Mammary epithelial cell (primary cell): ENCODE measurements at regions of chr2 and their contacts with region 1.

Region 1: DNA sequence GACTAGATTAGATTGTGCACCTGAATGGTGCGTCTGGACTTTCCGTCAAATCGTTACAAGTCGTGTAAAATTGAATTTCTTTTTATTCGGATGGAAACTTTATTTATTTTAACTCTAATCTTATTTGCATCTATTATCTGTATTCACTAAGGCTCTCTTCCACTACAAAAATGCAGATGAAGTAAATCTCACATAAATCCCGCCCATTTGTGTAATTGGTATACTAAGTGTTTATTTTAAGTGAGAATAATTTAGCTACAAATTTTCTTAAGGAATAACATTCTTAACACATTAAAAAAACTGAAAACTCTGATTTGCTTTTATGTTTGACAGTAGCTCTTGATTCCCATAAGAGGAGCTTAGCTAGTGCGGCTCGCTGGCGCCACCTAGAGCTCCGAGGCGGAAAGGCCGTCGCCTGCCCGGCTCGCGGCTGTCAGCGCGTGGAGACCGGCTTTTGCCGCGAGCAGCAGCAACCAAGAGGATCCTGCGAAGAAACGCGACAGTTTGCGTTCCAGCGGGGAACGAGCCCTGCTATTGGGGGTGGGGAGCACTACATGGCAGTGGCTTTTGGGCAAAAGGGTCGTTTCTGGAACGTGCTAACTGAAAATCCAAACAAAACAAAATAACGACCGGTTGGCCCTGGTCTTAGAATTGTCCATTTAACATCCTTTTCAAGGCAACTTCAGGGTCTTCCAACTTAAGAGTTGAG is 6.7 kb downstream of the SP9 start:
- DNase-seq: peak; percentile 73
- H3K4me3 ChIP-seq: peak overlapping the region; percentile 12 to 42 (median 16)
- H3K27ac ChIP-seq: no peak overlapping the region
- H3K4me1 ChIP-seq: peaks cover 39% of the 10 kb centered on the region
- H3K27me3 ChIP-seq: peaks cover 51% of the 10 kb centered on the region
- CTCF ChIP-seq: peak; percentile 96 to 99

Region 2: GRCh38 chr2:172806493-172806892 is 1534.9 kb before region 1 on chr2:
- CTCF ChIA-PET with region 1: no interaction called
- dilution Hi-C with region 1: no loop called
- in situ Hi-C with region 1: no loop called
- intact Hi-C with region 1: loop called (anchors 10 kb)
- DNase-seq: no peak
- H3K4me3 ChIP-seq: no peak overlapping the region
- H3K27ac ChIP-seq: no peak overlapping the region
- H3K4me1 ChIP-seq: peaks cover 9% of the 10 kb centered on the region
- H3K27me3 ChIP-seq: no peaks in the 10 kb centered on the region
- CTCF ChIP-seq: peak; percentile 90 to 96

Region 3: DNA sequence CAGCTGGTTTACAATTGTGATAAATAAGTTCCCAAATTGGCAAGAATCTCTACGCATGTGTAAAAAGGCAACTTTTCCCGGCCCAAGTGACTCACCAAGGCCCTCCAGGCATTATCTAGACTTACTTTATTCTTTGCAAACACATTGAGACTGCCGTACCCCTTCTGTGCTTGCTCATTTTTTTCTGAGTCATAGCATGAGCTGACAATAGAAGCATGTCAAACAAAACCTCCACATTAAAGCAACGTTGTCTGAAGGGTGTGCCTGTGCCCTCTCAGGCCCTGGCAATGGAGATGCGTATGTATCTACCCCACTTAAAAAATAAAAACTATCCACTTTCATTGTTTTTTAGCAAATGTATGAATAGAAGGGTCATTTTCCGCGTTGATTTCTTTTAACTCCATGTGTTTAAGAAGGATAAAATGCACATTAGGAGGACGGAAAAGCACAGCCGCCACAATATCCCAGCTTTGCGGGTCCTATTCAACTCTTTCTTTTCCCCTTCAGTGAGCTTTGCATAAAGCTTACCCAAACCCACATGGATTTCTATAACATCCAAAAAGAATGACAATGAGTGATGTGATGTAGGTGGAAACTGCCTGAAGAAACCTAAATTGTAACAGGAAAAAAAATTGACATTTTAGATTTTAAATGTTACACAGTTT is 688.5 kb before region 1 on chr2:
- CTCF ChIA-PET with region 1: no interaction called
- dilution Hi-C with region 1: no loop called
- in situ Hi-C with region 1: no loop called
- intact Hi-C with region 1: loop called (anchors 10 kb)
- DNase-seq: peak; percentile 98
- H3K4me3 ChIP-seq: no peak overlapping the region
- H3K27ac ChIP-seq: peak overlapping the region; percentile 98
- H3K4me1 ChIP-seq: peaks cover 44% of the 10 kb centered on the region
- H3K27me3 ChIP-seq: no peaks in the 10 kb centered on the region
- CTCF ChIP-seq: no peak

Region 4: GRCh38 chr2:173834141-173834540 is 507.3 kb before region 1 on chr2:
- CTCF ChIA-PET with region 1: no interaction called
- dilution Hi-C with region 1: no loop called
- in situ Hi-C with region 1: no loop called
- intact Hi-C with region 1: no loop called
- DNase-seq: no peak
- H3K4me3 ChIP-seq: no peak overlapping the region
- H3K27ac ChIP-seq: no peak overlapping the region
- H3K4me1 ChIP-seq: no peaks in the 10 kb centered on the region
- H3K27me3 ChIP-seq: peaks cover 6% of the 10 kb centered on the region
- CTCF ChIP-seq: no peak

Region 5: DNA sequence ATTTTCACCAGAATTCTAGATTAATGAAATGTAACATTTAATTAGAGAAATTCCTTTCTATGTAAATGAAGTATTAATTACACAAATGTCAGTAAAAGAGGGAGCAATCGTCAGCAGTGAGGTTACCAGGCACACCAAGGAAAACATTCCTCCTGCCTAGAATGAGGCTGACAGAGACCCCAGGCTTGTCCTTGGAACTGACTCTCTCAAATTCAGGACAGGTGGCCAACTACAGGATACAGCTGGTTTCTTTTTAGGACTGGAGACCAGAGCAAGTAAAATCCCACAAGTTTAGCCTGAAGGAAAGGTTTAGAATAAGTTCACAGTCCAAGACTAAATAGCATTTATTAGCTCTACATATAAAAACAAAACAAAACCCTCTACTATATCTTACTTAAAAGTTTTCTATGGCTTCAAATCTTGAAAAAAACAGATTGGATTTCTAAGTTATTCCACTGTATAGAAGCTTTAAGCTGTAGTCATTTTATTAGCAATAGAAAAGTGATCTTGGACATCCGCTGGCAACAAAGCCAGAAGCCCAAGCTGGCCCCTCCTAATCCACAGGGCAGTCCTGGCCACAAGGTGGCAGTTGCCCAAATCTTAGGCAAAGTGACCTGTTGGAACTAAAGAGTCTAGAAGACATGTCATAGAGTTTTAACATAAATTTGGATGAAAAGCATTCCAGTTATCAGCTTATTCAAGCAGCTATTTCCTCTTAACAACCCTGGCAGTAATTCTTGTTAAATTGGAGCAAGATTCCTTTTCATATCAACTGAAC is 457.2 kb before region 1 on chr2:
- CTCF ChIA-PET with region 1: interaction called, 3 read pairs
- dilution Hi-C with region 1: no loop called
- in situ Hi-C with region 1: no loop called
- intact Hi-C with region 1: loop called (anchors 1 kb)
- DNase-seq: peak; percentile 30
- H3K4me3 ChIP-seq: no peak overlapping the region
- H3K27ac ChIP-seq: no peak overlapping the region
- H3K4me1 ChIP-seq: no peaks in the 10 kb centered on the region
- H3K27me3 ChIP-seq: no peaks in the 10 kb centered on the region
- CTCF ChIP-seq: peak; percentile 52 to 68

Region 6: GRCh38 chr2:174078275-174078674 is 263.2 kb before region 1 on chr2:
- CTCF ChIA-PET with region 1: no interaction called
- dilution Hi-C with region 1: no loop called
- in situ Hi-C with region 1: no loop called
- intact Hi-C with region 1: loop called (anchors 1 kb)
- DNase-seq: no peak
- H3K4me3 ChIP-seq: no peak overlapping the region
- H3K27ac ChIP-seq: no peak overlapping the region
- H3K4me1 ChIP-seq: peaks cover 5% of the 10 kb centered on the region
- H3K27me3 ChIP-seq: no peaks in the 10 kb centered on the region
- CTCF ChIP-seq: peak; percentile 32 to 51

Region 7: GRCh38 chr2:174180165-174180724 is 161.2 kb before region 1 on chr2:
- CTCF ChIA-PET with region 1: no interaction called
- dilution Hi-C with region 1: no loop called
- in situ Hi-C with region 1: loop called in 1 of 2 experiments (anchors 25 kb)
- intact Hi-C with region 1: loop called (anchors 2 kb)
- DNase-seq: peak; percentile 11
- H3K4me3 ChIP-seq: no peak overlapping the region
- H3K27ac ChIP-seq: no peak overlapping the region
- H3K4me1 ChIP-seq: peaks cover 13% of the 10 kb centered on the region
- H3K27me3 ChIP-seq: no peaks in the 10 kb centered on the region
- CTCF ChIP-seq: peak; percentile 11 to 24